ENCODE measurements at regions of chr11 and their contacts with region 1.

Region 1: DNA sequence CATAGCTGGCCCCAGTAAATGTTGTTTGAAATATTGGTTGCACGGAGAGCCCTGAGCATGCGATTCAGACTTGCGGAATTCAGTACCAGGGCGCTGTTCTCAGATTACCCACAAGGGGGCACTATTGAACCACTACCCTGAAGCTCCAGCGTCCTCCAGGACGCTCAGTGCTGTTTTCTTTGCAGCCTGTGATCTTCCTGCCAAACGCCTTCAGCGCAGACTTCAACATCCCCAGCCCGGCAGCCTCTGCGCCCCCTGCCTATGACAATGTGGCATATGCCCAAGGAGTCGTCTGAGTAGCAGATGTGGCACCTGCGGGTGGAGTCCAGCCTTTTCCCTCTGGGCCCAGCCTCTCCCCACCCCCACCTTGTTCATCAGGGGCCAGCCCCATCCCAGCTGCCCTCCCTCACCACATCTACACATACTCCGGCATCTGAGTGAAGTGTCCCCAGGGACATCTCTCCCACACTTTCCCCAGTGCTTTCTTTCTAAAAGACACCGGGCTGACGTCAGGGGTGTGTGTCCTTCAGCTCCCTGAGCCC is 9.6 kb upstream of the MS4A10 start:
- DNase-seq: peak; percentile 89
- H3K4me3 Mint-ChIP-seq: no peak overlapping the region
- H3K27ac Mint-ChIP-seq: no peak overlapping the region
- H3K4me1 Mint-ChIP-seq: peaks cover 10% of the 10 kb centered on the region
- H3K27me3 Mint-ChIP-seq: peaks cover 4% of the 10 kb centered on the region

Region 2: DNA sequence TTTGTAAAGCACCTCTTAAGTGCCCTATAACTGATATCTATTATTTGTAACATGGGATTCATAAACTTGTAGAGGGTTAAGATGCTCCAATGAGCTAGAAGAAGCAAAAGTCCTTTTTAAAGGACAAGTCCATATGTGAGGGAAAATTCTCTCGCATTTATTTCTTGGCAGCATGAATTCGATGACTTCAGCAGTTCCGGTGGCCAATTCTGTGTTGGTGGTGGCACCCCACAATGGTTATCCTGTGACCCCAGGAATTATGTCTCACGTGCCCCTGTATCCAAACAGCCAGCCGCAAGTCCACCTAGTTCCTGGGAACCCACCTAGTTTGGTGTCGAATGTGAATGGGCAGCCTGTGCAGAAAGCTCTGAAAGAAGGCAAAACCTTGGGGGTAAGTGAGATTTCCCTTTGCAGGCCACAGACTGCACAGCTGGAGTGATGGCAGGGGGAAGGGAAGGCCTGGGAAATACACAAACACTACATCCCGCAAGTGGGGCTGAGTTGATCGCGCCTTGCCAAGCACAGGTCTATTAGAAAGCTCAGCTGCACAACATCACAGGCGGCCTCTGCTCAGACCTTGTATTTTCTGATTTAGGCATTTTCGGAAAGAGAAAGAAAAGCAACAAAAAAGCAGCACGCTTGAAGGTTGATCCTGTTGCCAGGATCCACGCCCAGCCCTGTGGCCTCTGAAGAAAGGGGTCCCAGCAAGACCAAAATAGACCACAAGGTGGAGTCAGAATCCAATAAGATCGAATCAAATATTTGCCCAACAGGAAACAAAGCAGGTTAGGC is 74.6 kb before region 1 on chr11:
- CTCF ChIA-PET with region 1: no interaction called
- POLR2A ChIA-PET with region 1: no interaction called
- intact Hi-C with region 1: no loop called
- DNase-seq: no peak
- H3K4me3 Mint-ChIP-seq: no peak overlapping the region
- H3K27ac Mint-ChIP-seq: no peak overlapping the region
- H3K4me1 Mint-ChIP-seq: no peaks in the 10 kb centered on the region
- H3K27me3 Mint-ChIP-seq: peaks cover 3% of the 10 kb centered on the region

Region 3: DNA sequence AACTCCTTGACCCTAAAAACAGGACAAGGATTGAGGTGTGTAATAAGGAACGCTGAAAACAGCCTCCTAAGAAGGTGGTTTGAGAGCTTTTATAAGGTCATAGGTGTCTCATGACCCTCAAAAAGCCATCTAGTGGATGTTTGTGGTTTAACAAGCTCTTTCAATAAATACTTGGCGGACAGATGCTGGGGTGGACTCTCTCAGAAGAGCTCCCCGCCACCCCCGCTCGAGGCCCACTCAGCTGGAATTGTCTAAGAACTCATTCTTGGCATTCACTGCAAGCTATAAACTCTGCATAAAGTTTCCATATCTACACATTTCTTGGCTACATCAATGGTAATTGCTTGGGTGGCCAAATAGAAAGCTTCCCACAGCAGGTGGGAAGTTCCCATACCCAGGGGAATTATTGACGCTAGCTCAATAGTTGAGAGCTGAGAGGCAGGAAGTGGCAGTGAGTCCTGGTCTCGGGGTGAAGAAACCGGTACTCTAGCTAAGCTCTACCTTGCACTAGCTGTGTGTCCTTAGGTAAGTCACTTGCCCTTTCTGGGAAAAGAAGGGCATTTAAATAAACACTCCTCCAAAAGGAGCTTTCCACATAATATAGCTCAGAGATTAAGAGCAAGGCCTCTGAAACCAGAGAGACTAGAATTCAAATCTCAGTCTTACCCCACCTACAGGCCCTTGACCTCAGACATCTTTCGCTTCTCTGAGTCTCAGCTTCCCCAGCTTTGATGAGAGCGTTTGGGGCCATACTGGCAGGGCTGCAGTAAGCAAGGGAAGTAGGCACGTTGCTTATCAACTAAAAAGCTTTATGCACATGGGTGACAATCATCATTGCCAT is 12.4 kb before region 1 on chr11:
- CTCF ChIA-PET with region 1: interaction called, 56 read pairs
- POLR2A ChIA-PET with region 1: interaction called, 3 read pairs
- intact Hi-C with region 1: no loop called
- DNase-seq: peak; percentile 20
- H3K4me3 Mint-ChIP-seq: no peak overlapping the region
- H3K27ac Mint-ChIP-seq: no peak overlapping the region
- H3K4me1 Mint-ChIP-seq: peaks cover 8% of the 10 kb centered on the region
- H3K27me3 Mint-ChIP-seq: peaks cover 33% of the 10 kb centered on the region

Region 4: GRCh38 chr11:60985991-60986915 is 210.8 kb after region 1 on chr11:
- CTCF ChIA-PET with region 1: no interaction called
- POLR2A ChIA-PET with region 1: no interaction called
- intact Hi-C with region 1: no loop called
- DNase-seq: peak; percentile 97
- H3K4me3 Mint-ChIP-seq: peak overlapping the region; percentile 84
- H3K27ac Mint-ChIP-seq: peak overlapping the region; percentile 99
- H3K4me1 Mint-ChIP-seq: peaks cover 91% of the 10 kb centered on the region
- H3K27me3 Mint-ChIP-seq: no peaks in the 10 kb centered on the region

Measured in activated CD4-positive, alpha-beta memory T cell treated with anti-CD3 and anti-CD28 coated beads for 36 hours (primary cell).